ENCODE measurements at regions of chr5 and their contacts with region 1.

Region 1: DNA sequence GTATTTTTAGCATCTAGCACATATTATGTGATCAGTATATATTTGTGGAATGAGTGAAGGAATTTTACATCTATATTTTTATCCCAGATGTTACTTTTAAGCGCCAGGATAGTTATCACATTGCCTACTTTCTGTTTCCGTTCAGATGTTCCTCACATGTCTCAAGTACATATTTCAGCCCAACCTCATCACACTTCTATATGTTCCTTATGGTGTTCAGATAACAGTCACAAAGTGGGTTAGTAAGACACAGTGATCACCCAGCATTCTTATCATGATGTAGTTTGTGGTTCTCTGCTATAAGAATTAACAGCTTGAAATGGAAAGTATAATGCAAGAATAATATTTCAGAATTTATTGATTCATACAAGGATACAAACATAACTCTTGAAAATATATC is 170.0 kb upstream of the RASA1 start:
- DNase-seq: no peak
- ATAC-seq: no peak
- H3K4me3 ChIP-seq: no peak overlapping the region
- H3K27ac ChIP-seq: no peak overlapping the region
- H3K4me1 ChIP-seq: peaks cover 1% of the 10 kb centered on the region; the same call in 1 of the 2 replicates
- H3K27me3 ChIP-seq: no peaks in the 10 kb centered on the region
- CTCF ChIP-seq: no peak
- POLR2A ChIP-seq: no peak
- RAD21 ChIP-seq: no peak

Region 2: GRCh38 chr5:87113861-87114260 is 16.2 kb after region 1 on chr5:
- CTCF ChIA-PET with region 1: interaction called, 3 read pairs
- POLR2A ChIA-PET with region 1: no interaction called
- dilution Hi-C with region 1: no loop called
- in situ Hi-C with region 1: no loop called
- intact Hi-C with region 1: loop called (anchors 2 kb)
- DNase-seq: peak; percentile 89
- ATAC-seq: peak; percentile 96
- H3K4me3 ChIP-seq: no peak overlapping the region
- H3K27ac ChIP-seq: no peak overlapping the region
- H3K4me1 ChIP-seq: peaks cover 2% of the 10 kb centered on the region; the same call in 1 of the 2 replicates
- H3K27me3 ChIP-seq: no peaks in the 10 kb centered on the region
- CTCF ChIP-seq: no peak
- POLR2A ChIP-seq: no peak
- RAD21 ChIP-seq: no peak; the same call in 1 of the 2 replicates